ENCODE measurements at regions of chr12 and their contacts with region 1.

Region 1: GRCh38 chr12:64696080-64696741 is 63.0 kb downstream of the GNS start:
- DNase-seq: no peak
- ATAC-seq: 0 out of 2 replicates have a peak, but pooled peaks have one; percentile 25
- H3K4me3 ChIP-seq: no peak overlapping the region
- H3K27ac ChIP-seq: no peak overlapping the region
- H3K4me1 ChIP-seq: peaks cover 6 to 15% of the 10 kb centered on the region in 2 experiments; a peak in 2 of 4 replicates
- H3K27me3 ChIP-seq: no peaks in the 10 kb centered on the region
- CTCF ChIP-seq: peak; percentile 11 to 52 (median 48); a peak in 3 of 6 replicates
- POLR2A ChIP-seq: no peak
- RAD21 ChIP-seq: peak; percentile 80

Region 2: GRCh38 chr12:63826006-63826585 is 870.1 kb before region 1 on chr12:
- CTCF ChIA-PET with region 1: no interaction called
- POLR2A ChIA-PET with region 1: no interaction called
- RAD21 ChIA-PET with region 1: no interaction called
- intact Hi-C with region 1: loop called (anchors 10 kb)
- DNase-seq: peak; percentile 66
- ATAC-seq: peak; percentile 91
- H3K4me3 ChIP-seq: no peak overlapping the region
- H3K27ac ChIP-seq: no peak overlapping the region
- H3K4me1 ChIP-seq: no peaks in the 10 kb centered on the region
- H3K27me3 ChIP-seq: no peaks in the 10 kb centered on the region
- CTCF ChIP-seq: peak; percentile 82 to 84 (median 83)
- POLR2A ChIP-seq: no peak
- RAD21 ChIP-seq: peak; percentile 91

Region 3: DNA sequence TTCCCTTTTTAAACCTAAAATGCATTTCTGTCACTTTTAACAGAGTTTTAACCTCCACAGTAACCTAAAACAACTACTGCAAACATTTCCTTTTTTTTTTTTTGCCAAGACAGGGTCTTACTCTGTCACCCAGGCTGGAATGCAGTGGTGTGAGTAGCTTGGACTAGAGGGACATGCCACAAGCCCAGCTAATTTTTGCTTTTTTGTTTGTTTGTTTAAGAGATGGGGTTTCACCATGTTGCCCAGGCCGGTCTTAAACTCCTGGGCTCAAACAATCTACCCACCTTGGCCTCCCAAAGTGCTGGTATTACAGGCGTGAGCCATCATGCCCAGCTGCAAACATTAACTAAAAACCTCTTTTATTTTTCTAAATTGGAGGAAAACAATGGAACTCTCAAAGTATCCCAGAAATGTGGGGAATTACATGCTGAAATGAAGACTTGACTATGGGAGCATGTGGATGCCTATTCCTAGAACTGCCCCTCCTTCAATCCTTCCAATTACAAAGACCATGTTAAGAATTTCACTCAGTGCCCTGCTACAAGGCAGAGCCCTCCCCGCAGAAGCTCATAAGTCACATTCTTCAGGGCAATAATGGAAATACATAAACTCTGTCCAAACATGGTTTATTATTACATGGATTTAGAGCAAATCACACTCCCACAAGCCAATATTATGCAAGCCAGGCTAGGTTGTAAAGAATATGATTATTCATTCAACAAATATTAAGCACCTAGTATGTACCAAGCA is 372.6 kb before region 1 on chr12:
- CTCF ChIA-PET with region 1: no interaction called
- POLR2A ChIA-PET with region 1: no interaction called
- RAD21 ChIA-PET with region 1: no interaction called
- intact Hi-C with region 1: no loop called
- DNase-seq: no peak
- ATAC-seq: no peak
- H3K4me3 ChIP-seq: no peak overlapping the region
- H3K27ac ChIP-seq: no peak overlapping the region
- H3K4me1 ChIP-seq: no peaks in the 10 kb centered on the region
- H3K27me3 ChIP-seq: no peaks in the 10 kb centered on the region
- CTCF ChIP-seq: no peak
- POLR2A ChIP-seq: no peak
- RAD21 ChIP-seq: no peak

Region 4: GRCh38 chr12:64431791-64432190 is 264.4 kb before region 1 on chr12:
- CTCF ChIA-PET with region 1: no interaction called
- POLR2A ChIA-PET with region 1: no interaction called
- RAD21 ChIA-PET with region 1: no interaction called
- intact Hi-C with region 1: loop called (anchors 5 kb)
- DNase-seq: no peak
- ATAC-seq: no peak
- H3K4me3 ChIP-seq: no peak overlapping the region
- H3K27ac ChIP-seq: no peak overlapping the region
- H3K4me1 ChIP-seq: peaks cover 0 to 8% of the 10 kb centered on the region in 2 experiments; a peak in 1 of 4 replicates
- H3K27me3 ChIP-seq: no peaks in the 10 kb centered on the region
- CTCF ChIP-seq: no peak
- POLR2A ChIP-seq: no peak
- RAD21 ChIP-seq: no peak

Region 5: GRCh38 chr12:64551698-64552097 is 144.5 kb before region 1 on chr12:
- CTCF ChIA-PET with region 1: interaction called, 93 read pairs
- POLR2A ChIA-PET with region 1: interaction called, 5 read pairs
- RAD21 ChIA-PET with region 1: interaction called, 4 to 9 read pairs
- intact Hi-C with region 1: loop called (anchors 1 kb)
- DNase-seq: no peak
- ATAC-seq: no peak
- H3K4me3 ChIP-seq: no peak overlapping the region
- H3K27ac ChIP-seq: no peak overlapping the region
- H3K4me1 ChIP-seq: peaks cover 0 to 5% of the 10 kb centered on the region in 2 experiments; a peak in 1 of 4 replicates
- H3K27me3 ChIP-seq: no peaks in the 10 kb centered on the region
- CTCF ChIP-seq: no peak
- POLR2A ChIP-seq: no peak
- RAD21 ChIP-seq: no peak

Region 6: GRCh38 chr12:64706306-64706705 is 10.1 kb after region 1 on chr12:
- CTCF ChIA-PET with region 1: interaction called, 15 read pairs
- POLR2A ChIA-PET with region 1: no interaction called
- RAD21 ChIA-PET with region 1: no interaction called
- intact Hi-C with region 1: no loop called
- DNase-seq: no peak
- ATAC-seq: no peak
- H3K4me3 ChIP-seq: no peak overlapping the region
- H3K27ac ChIP-seq: no peak overlapping the region
- H3K4me1 ChIP-seq: no peaks in the 10 kb centered on the region
- H3K27me3 ChIP-seq: no peaks in the 10 kb centered on the region
- CTCF ChIP-seq: no peak
- POLR2A ChIP-seq: no peak
- RAD21 ChIP-seq: no peak

Region 7: DNA sequence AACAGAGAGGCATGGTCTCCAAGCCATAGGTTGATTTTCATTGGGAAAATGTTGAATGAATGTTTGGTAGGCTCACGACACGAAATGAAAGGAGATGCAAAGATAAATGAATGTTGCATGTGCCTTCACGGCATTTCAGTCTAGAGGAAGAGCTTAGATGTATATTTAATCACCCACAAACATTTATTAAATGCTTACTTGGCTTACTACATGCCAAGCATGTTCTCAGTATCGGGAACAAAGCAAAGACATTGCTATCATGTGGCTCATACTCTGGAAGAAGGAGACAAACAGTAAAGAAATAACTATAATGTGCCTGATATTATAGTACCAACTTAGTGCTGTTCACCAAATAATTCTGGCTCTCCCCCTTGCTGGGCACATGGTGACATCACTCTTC is 1300.8 kb after region 1 on chr12:
- CTCF ChIA-PET with region 1: no interaction called
- POLR2A ChIA-PET with region 1: no interaction called
- RAD21 ChIA-PET with region 1: no interaction called
- intact Hi-C with region 1: no loop called
- DNase-seq: no peak
- ATAC-seq: no peak
- H3K4me3 ChIP-seq: no peak overlapping the region
- H3K27ac ChIP-seq: no peak overlapping the region
- H3K4me1 ChIP-seq: peaks cover 8 to 11% of the 10 kb centered on the region in 2 experiments; a peak in 3 of 4 replicates
- H3K27me3 ChIP-seq: no peaks in the 10 kb centered on the region
- CTCF ChIP-seq: no peak
- POLR2A ChIP-seq: no peak
- RAD21 ChIP-seq: no peak

Measured in HCT116 (cell line).